Activated CD8-positive, alpha-beta T cell treated with anti-CD3 and anti-CD28 coated beads for 36 hours (primary cell): ENCODE measurements at regions of chr7 and their contacts with region 1.

Region 1: GRCh38 chr7:24812310-24812945 is 55.2 kb upstream of the GSDME start:
- DNase-seq: peak; percentile 52
- ATAC-seq: peak; percentile 75
- H3K4me3 Mint-ChIP-seq: no peak overlapping the region
- H3K27ac Mint-ChIP-seq: no peak overlapping the region
- H3K4me1 Mint-ChIP-seq: no peaks in the 10 kb centered on the region
- H3K27me3 Mint-ChIP-seq: no peaks in the 10 kb centered on the region
- CTCF ChIP-seq: peak; percentile 99

Region 2: GRCh38 chr7:24536682-24537081 is 275.7 kb before region 1 on chr7:
- CTCF ChIA-PET with region 1: no interaction called
- POLR2A ChIA-PET with region 1: no interaction called
- intact Hi-C with region 1: no loop called
- DNase-seq: no peak
- ATAC-seq: no peak
- H3K4me3 Mint-ChIP-seq: no peak overlapping the region
- H3K27ac Mint-ChIP-seq: no peak overlapping the region
- H3K4me1 Mint-ChIP-seq: no peaks in the 10 kb centered on the region
- H3K27me3 Mint-ChIP-seq: no peaks in the 10 kb centered on the region
- CTCF ChIP-seq: no peak

Region 3: DNA sequence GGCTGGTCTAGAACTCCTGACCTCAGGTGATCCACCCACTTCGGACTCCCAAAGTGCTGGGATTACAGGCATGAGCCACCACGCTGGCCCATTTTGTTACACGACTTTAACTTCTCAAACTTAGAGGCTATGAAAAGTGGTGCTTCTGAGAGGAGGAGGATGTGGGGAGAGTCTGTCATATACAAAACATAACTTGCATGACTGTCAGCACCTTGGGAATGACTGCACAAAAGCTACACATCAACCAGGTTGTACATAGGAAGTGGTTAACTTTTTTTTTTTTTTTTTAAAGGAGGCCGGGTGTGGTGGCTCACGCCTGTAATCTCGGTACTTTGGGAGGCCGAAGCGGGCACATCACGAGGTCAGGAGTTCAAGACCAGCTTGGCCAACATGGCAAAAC is 11.8 kb before region 1 on chr7:
- CTCF ChIA-PET with region 1: interaction called, 39 read pairs
- POLR2A ChIA-PET with region 1: no interaction called
- intact Hi-C with region 1: no loop called
- DNase-seq: no peak
- ATAC-seq: peak; percentile 68
- H3K4me3 Mint-ChIP-seq: no peak overlapping the region
- H3K27ac Mint-ChIP-seq: no peak overlapping the region
- H3K4me1 Mint-ChIP-seq: peaks cover 3% of the 10 kb centered on the region
- H3K27me3 Mint-ChIP-seq: no peaks in the 10 kb centered on the region
- CTCF ChIP-seq: no peak

Region 4: DNA sequence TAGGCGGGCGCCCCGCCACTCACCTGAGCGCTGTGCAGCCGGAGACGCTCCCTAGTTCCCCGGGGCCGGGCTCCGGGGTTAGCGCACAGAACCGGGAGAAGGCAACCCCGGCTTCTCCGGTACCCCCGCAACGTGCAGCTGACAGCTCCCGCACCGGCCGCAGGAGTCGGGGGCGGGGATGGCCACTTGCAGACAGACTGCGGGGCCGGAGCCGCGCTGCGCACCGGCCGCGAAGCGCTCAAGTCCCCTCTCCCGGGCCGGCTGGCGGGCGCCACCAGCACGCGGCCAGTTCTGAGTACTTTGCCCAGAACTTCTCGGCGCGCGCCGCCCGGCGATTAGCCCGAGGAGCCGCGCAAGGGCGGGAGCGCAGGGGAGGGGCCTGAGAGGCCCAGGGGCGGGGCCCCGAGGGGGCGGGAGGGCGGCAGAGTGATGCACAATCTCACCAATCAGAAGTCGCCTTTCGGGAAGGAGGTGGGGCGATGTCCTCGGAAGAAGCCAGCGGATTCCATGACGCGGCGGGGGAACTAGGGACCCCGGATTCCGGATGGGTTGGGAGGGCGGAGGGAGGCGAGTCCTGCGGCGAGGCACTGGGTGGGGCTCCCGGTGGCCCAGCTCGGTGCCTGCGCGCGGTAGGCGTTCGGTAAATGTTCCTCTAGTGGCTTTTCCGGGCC is 167.6 kb after region 1 on chr7 and contains the start of gene OSBPL3:
- CTCF ChIA-PET with region 1: interaction called, 15 read pairs
- POLR2A ChIA-PET with region 1: no interaction called
- intact Hi-C with region 1: no loop called
- DNase-seq: peak; percentile 96
- ATAC-seq: peak; percentile 90
- H3K4me3 Mint-ChIP-seq: peak within 1 kb of the TSS; percentile 83
- H3K27ac Mint-ChIP-seq: peak within 1 kb of the TSS; percentile 89
- H3K4me1 Mint-ChIP-seq: peaks cover 53% of the 10 kb centered on the region
- H3K27me3 Mint-ChIP-seq: no peaks in the 10 kb centered on the region
- CTCF ChIP-seq: peak; percentile 7
- total RNA-seq, gene OSBPL3: 44.6 to 45.7 TPM

Region 5: GRCh38 chr7:25060487-25061055 is 248.1 kb after region 1 on chr7:
- CTCF ChIA-PET with region 1: interaction called, 66 read pairs
- POLR2A ChIA-PET with region 1: no interaction called
- intact Hi-C with region 1: no loop called
- DNase-seq: no peak
- ATAC-seq: no peak
- H3K4me3 Mint-ChIP-seq: no peak overlapping the region
- H3K27ac Mint-ChIP-seq: no peak overlapping the region
- H3K4me1 Mint-ChIP-seq: peaks cover 4% of the 10 kb centered on the region
- H3K27me3 Mint-ChIP-seq: no peaks in the 10 kb centered on the region
- CTCF ChIP-seq: no peak

Region 6: DNA sequence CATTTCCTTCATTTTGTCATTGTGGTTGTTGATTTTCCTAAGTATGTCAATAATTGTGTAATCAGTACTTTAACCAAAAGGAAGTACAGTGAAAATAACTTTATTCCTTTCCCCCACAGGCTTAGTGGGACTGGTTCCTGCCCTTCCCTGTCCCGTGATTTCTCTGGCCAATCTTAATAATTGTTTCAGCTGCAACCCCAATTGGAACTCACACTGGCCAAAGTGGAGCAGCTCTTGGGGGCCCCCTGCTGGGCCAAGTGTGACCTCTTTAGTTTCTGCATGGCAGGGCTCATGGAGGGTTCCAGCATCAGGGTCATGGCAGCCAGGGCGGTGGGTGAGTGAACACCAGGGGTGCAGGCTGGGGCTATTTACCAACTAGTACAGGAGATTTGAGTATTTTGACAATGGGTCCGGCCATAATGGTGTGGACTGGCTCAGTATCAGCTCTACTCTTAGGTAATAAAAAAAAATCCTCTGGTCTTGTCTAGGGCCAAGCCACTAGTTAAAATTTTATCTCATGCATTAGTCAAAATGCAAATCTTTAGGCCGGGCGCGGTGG is 280.9 kb after region 1 on chr7:
- CTCF ChIA-PET with region 1: interaction called, 148 read pairs
- POLR2A ChIA-PET with region 1: interaction called, 3 read pairs
- intact Hi-C with region 1: no loop called
- DNase-seq: peak; percentile 91
- ATAC-seq: peak; percentile 90
- H3K4me3 Mint-ChIP-seq: no peak overlapping the region
- H3K27ac Mint-ChIP-seq: no peak overlapping the region
- H3K4me1 Mint-ChIP-seq: peaks cover 13% of the 10 kb centered on the region
- H3K27me3 Mint-ChIP-seq: peaks cover 2% of the 10 kb centered on the region
- CTCF ChIP-seq: peak; percentile 83

Region 7: DNA sequence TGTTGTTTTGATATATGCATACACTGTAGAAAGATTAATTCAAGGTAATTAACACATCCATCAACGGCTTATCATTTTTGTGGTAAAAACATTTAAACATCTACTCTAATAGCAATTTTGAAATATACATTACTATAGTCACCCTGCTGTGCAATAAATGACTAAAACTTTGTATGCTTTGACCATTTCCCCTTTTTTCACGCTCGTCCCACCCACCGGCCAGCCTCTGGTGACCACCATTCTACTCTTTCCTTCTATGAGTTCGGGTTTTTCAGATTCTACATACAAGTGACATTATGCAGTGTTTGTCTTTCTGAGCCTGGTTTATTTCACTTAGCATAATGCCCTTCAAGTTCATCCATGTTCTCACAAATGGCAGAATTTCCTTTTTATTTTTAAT is 291.3 kb after region 1 on chr7:
- CTCF ChIA-PET with region 1: interaction called, 38 read pairs
- POLR2A ChIA-PET with region 1: interaction called, 3 read pairs
- intact Hi-C with region 1: no loop called
- DNase-seq: no peak
- ATAC-seq: no peak
- H3K4me3 Mint-ChIP-seq: no peak overlapping the region
- H3K27ac Mint-ChIP-seq: no peak overlapping the region
- H3K4me1 Mint-ChIP-seq: no peaks in the 10 kb centered on the region
- H3K27me3 Mint-ChIP-seq: peaks cover 1% of the 10 kb centered on the region
- CTCF ChIP-seq: no peak